PC-3 (cell line): ENCODE measurements at regions of chr17 and their contacts with region 1.

Region 1: DNA sequence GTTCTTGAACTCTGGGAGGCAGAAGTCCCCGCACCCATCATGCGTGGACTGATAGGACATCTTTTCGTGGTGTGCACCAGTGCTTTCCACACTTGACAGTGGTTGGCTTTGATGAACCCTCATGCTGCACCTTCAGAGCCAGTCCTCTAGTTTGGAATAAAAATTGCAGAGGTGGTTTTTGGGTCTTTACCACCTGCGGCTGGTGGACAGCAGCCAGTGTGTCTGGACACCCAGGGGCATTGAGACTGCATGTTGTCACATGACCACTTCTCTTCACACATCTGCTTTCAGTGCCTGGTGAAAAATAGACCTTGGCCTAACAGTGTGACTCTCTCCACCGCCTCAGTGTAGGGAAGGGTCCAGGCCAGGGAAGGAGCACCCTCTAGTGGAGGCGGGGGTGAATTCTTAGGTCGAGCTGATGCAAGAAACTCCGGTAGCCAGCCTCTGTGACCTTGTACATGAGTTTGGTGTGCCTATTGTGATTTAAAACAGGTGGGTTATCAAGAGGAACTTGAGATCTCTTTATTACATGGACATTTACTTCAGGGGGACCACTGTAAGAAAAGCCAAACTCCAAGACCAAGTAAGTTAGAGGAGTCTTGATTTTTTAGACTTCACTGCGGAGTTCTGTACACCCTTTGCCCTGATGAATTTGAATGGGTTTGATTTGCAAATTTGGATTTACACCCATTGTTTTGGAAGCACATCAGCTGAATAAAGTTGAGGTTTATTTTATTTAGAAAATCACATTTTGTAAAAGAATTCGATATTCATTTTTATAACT is 17.9 kb downstream of the GOSR2 start:
- DNase-seq: peak; percentile 82
- ATAC-seq: peak; percentile 81
- H3K4me3 ChIP-seq: no peak overlapping the region
- H3K27ac ChIP-seq: no peak overlapping the region
- H3K4me1 ChIP-seq: peaks cover 11% of the 10 kb centered on the region; the same call in 1 of the 2 replicates
- H3K27me3 ChIP-seq: no peaks in the 10 kb centered on the region
- CTCF ChIP-seq: peak; percentile 93

Region 2: DNA sequence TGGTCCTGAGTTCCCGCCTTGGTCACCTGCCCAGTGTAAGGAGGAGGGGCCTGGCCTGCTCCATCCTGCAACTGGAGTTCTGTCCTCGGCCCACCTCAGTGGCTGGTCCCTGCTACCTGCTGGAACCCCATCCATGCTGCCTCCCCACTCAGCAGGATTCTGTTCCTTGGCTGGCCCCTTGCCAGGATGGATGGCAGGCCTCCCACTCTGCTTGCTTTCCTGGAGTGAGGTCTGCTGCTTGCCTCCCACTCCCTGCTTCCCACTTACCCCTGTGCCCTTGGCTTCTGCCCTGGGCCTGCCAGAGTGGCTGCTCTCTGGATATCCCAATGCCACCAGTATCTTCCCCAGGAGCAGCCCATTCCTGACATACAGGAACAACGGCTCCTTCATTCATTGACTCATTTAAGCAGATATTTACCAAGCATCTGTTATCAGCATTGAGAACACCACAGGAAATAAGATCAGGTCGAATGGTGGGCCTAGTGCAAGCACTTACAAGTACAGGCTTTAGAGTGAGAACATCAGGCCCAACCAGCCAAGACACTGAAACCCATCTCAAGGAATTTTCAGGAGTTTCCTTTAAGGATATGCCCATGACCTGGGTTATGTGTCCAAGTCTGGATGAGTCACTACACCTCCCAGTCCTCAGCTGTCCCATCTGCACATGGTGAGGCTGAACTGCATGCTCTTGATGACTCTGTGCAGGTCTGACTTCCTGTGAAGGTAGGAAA is 55.2 kb after region 1 on chr17:
- CTCF ChIA-PET with region 1: no interaction called
- POLR2A ChIA-PET with region 1: no interaction called
- intact Hi-C with region 1: loop called (anchors 2 kb)
- DNase-seq: peak; percentile 64
- ATAC-seq: peak; percentile 79
- H3K4me3 ChIP-seq: no peak overlapping the region
- H3K27ac ChIP-seq: no peak overlapping the region
- H3K4me1 ChIP-seq: peaks cover 10% of the 10 kb centered on the region
- H3K27me3 ChIP-seq: no peaks in the 10 kb centered on the region
- CTCF ChIP-seq: no peak